Astrocyte of the cerebellum (primary cell): ENCODE measurements at regions of chr15 and their contacts with region 1.

Region 1: DNA sequence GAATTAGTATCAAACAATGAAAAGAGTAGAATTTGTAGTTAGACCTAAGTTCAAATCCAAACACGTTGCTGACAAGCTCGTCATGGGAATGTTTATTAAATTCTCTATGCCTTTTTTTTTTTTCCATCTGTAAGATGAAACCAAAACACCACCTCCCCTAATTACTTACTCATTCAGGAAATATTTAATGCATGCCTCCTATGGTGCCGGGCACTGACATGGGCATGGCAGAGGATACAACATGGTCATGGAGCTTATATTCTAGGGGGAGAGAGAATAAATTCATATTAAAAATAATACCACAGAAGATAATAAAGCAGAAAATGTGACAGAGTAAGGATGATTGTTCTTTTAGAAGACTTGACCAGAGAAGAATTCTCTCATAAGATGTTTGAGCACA is 215.8 kb downstream of the RYR3 start:
- DNase-seq: no peak
- H3K4me3 ChIP-seq: no peak overlapping the region
- CTCF ChIP-seq: no peak

Region 2: GRCh38 chr15:33476076-33476475 is 50.5 kb before region 1 on chr15:
- in situ Hi-C with region 1: loop called (anchors 5 kb)
- DNase-seq: no peak
- H3K4me3 ChIP-seq: no peak overlapping the region
- CTCF ChIP-seq: no peak

Region 3: GRCh38 chr15:33623010-33623409 is 96.5 kb after region 1 on chr15:
- in situ Hi-C with region 1: loop called (anchors 5 kb)
- DNase-seq: no peak
- H3K4me3 ChIP-seq: no peak overlapping the region
- CTCF ChIP-seq: peak; percentile 7